ENCODE measurements at regions of chr20 and their contacts with region 1.

Region 1: GRCh38 chr20:50085452-50086365 is 27.2 kb downstream of the UBE2V1 start:
- DNase-seq: peak; percentile 75
- H3K4me3 Mint-ChIP-seq: peak overlapping the region; percentile 8
- H3K27ac Mint-ChIP-seq: peak overlapping the region; percentile 77
- H3K4me1 Mint-ChIP-seq: peaks cover 33% of the 10 kb centered on the region
- H3K27me3 Mint-ChIP-seq: no peaks in the 10 kb centered on the region
- CTCF ChIP-seq: peak; percentile 60

Region 2: GRCh38 chr20:49685809-49686208 is 399.9 kb before region 1 on chr20:
- CTCF ChIA-PET with region 1: no interaction called
- POLR2A ChIA-PET with region 1: no interaction called
- intact Hi-C with region 1: no loop called
- DNase-seq: peak; percentile 53
- H3K4me3 Mint-ChIP-seq: no peak overlapping the region
- H3K27ac Mint-ChIP-seq: no peak overlapping the region
- H3K4me1 Mint-ChIP-seq: peaks cover 47% of the 10 kb centered on the region
- H3K27me3 Mint-ChIP-seq: no peaks in the 10 kb centered on the region
- CTCF ChIP-seq: no peak

Region 3: GRCh38 chr20:49964964-49965780 is 120.5 kb before region 1 on chr20:
- CTCF ChIA-PET with region 1: interaction called, 10 read pairs
- POLR2A ChIA-PET with region 1: no interaction called
- intact Hi-C with region 1: no loop called
- DNase-seq: peak; percentile 53
- H3K4me3 Mint-ChIP-seq: no peak overlapping the region
- H3K27ac Mint-ChIP-seq: no peak overlapping the region
- H3K4me1 Mint-ChIP-seq: peaks cover 14% of the 10 kb centered on the region
- H3K27me3 Mint-ChIP-seq: no peaks in the 10 kb centered on the region
- CTCF ChIP-seq: peak; percentile 39

Region 4: GRCh38 chr20:50101281-50101680 is 15.6 kb after region 1 on chr20:
- CTCF ChIA-PET with region 1: interaction called, 60 read pairs
- POLR2A ChIA-PET with region 1: interaction called, 177 read pairs
- intact Hi-C with region 1: no loop called
- DNase-seq: no peak
- H3K4me3 Mint-ChIP-seq: no peak overlapping the region
- H3K27ac Mint-ChIP-seq: no peak overlapping the region
- H3K4me1 Mint-ChIP-seq: peaks cover 31% of the 10 kb centered on the region
- H3K27me3 Mint-ChIP-seq: no peaks in the 10 kb centered on the region
- CTCF ChIP-seq: no peak

Region 5: GRCh38 chr20:50110141-50110925 is 24.6 kb after region 1 on chr20:
- CTCF ChIA-PET with region 1: interaction called, 36 read pairs
- POLR2A ChIA-PET with region 1: interaction called, 177 read pairs
- intact Hi-C with region 1: no loop called
- DNase-seq: no peak
- H3K4me3 Mint-ChIP-seq: peak overlapping the region; percentile 11
- H3K27ac Mint-ChIP-seq: peak overlapping the region; percentile 79
- H3K4me1 Mint-ChIP-seq: peaks cover 62% of the 10 kb centered on the region
- H3K27me3 Mint-ChIP-seq: no peaks in the 10 kb centered on the region
- CTCF ChIP-seq: no peak

Region 6: DNA sequence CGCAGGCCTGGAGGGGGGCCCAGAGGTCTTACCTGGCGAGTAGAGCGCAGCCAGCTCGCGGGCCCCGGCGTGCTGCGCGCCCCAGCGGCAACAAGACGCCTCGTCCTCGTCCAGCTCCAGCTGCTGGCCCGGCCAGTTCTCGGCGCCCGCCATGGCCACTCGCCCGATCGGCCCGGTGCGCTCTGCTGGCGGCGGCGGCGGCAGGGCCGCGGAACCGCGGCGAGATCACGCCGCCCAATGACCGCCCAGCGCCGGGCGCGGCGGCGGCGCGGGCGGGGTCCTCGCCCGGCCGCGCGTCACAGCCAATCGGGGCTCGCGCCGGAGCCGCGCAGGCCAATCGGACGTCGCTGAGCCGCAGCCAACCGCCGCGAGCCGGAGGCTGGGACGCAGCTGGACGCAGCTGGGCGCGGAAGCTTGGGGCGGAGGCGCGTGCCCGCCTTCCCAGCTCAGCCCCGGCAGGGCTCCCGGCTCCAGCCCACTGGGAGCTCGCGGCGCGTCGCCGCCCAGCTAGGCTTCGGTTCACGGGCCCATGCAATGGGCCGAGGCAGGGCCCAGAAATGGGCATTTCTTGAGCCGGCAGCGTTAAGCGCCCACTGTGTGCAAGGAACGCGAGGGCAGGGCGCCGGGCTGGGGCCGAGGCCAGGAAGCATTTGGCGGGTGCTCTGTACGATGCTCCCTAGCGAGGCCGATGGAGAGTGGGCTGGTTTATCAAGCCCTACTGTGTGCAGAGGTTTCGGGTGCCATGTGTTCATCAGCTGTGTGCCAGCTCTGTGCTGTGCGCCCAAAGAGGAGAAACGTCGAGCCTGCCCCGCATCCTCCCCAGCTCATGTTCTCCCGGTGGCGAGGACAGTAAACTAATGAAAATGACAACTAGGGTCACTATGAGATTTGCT is 68.0 kb after region 1 on chr20 and contains the start of gene PEDS1:
- CTCF ChIA-PET with region 1: interaction called, 26 read pairs
- POLR2A ChIA-PET with region 1: interaction called, 20 read pairs
- intact Hi-C with region 1: no loop called
- DNase-seq: peak; percentile 85
- H3K4me3 Mint-ChIP-seq: peak within 1 kb of the TSS; percentile 87
- H3K27ac Mint-ChIP-seq: peak within 1 kb of the TSS; percentile 94
- H3K4me1 Mint-ChIP-seq: peaks cover 44% of the 10 kb centered on the region
- H3K27me3 Mint-ChIP-seq: no peaks in the 10 kb centered on the region
- CTCF ChIP-seq: no peak
- total RNA-seq, gene PEDS1: 26.0 and 30.5 TPM in 2 replicates

Region 7: DNA sequence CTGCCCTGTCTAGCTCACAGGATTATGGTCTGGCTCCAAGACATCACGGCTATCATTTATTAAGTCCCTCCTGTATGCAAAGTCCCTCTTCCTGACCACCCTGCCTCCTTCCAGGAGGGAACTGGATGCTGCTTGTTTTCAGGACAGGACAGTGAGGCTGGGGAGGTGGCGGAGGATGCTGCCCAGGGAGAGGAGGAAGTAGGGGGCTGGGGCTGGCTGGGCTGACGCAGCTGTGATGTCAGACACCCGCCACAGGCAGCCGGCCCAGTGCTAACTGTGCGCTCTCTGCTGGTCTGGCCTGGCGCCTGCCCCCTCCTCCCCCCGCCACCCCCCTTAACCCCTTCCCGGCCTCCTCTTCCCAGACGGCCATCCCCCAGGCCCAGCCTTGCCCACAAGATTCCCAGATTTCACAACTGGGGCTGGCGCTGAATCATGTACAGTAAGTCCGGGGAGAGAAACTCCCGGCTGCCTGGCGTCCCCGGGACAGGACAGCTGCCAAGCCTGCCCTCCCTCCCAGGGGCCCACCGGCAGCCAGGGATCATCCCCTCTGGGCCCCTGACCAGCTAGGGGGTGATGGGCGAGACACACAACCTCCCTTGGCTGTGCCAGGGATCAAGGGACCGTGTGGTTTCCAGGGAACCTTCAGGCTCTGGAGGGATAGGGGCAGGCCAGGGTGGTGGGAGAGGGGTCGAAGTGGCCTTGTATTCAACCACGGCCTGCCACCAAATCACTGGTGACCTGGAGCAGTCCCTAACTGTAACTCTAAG is 223.0 kb after region 1 on chr20:
- CTCF ChIA-PET with region 1: no interaction called
- POLR2A ChIA-PET with region 1: no interaction called
- intact Hi-C with region 1: no loop called
- DNase-seq: peak; percentile 99
- H3K4me3 Mint-ChIP-seq: no peak overlapping the region
- H3K27ac Mint-ChIP-seq: peak overlapping the region; percentile 49
- H3K4me1 Mint-ChIP-seq: peaks cover 66% of the 10 kb centered on the region
- H3K27me3 Mint-ChIP-seq: no peaks in the 10 kb centered on the region
- CTCF ChIP-seq: peak; percentile 6

Measured in MCF 10A (cell line).